ENCODE measurements at regions of chr17 and their contacts with region 1.

Region 1: DNA sequence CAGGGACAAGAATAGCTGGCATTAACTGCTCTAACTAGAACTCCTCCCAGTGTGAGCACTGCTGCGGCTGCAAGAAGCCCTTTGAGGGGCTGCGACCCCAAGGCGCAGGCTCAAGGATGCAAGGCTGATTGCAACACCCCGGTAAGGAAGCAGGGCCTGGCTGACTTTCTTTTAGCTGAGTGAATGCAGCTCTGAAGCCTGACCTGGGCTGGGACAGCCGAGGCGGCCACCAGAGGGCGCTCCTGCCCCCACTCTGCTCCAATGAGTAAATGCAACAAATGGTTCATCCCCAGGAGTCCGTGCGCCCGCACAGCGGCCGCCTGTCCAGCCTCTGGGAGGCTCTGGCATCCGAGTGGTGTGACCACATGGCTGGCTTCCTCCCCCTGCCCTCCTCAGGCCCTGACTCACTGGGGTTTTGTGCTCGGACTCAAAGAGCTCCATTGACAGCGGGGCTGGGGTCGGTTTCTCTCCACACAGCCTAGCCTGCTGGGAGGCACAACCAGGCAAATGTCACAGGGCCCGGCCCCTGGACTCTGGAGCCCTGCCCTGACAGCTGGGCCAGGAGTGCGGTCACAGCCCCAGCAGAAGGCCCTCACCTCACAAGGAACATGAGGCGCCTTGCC is at the start of gene SMIM5:
- H3K4me3 ChIP-seq: no peak within 1 kb of the TSS
- H3K27ac ChIP-seq: no peak within 1 kb of the TSS
- H3K4me1 ChIP-seq: peaks cover 11% of the 10 kb centered on the region
- CTCF ChIP-seq: peak; percentile 83

Region 2: DNA sequence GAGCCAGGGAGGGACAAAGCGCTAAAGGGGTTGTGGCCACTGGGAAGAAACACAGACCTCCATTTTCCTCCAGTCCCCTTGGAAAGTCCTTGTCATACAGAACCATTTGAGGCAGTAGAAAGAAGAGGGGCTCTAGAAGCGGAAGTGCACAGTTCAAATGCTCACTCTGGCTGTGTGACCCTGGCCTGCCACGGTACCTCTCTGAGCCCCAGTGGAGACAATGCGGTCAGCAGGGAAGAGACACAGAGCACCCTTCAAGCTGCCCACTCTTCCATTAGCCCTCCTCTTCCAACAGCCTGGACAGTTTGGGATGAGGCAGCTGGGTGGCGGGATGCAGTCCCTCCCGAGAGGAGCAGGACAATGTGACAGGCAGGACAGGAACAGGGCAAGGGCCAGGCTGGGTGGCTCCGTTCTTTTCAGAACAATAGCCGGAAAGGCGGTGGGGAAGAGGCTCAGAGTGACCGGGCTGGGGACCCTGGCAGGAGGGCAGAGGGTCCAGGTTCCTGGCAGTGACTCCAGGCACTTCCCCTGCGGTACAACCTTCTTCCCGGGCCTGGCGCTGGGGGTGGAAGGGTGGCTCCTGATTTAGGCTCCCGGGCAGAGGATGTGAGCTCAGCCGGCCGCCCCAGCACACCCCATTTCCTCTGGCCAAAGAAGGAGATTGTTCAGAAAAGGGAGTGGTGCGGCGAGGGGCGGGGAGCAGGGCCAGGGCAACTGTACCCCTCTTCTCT is 123.3 kb before region 1 on chr17:
- CTCF ChIA-PET with region 1: no interaction called
- POLR2A ChIA-PET with region 1: no interaction called
- H3K4me3 ChIP-seq: no peak overlapping the region
- H3K27ac ChIP-seq: no peak overlapping the region
- H3K4me1 ChIP-seq: no peaks in the 10 kb centered on the region
- CTCF ChIP-seq: no peak

Region 3: GRCh38 chr17:75589012-75589918 is 43.7 kb before region 1 on chr17:
- CTCF ChIA-PET with region 1: interaction called, 11 read pairs
- POLR2A ChIA-PET with region 1: interaction called, 3 read pairs
- H3K4me3 ChIP-seq: peak overlapping the region; percentile 48
- H3K27ac ChIP-seq: peak overlapping the region; percentile 60; the same call in 1 of the 2 replicates
- H3K4me1 ChIP-seq: peaks cover 2% of the 10 kb centered on the region; the same call in 1 of the 2 replicates
- CTCF ChIP-seq: peak; percentile 58

Region 4: DNA sequence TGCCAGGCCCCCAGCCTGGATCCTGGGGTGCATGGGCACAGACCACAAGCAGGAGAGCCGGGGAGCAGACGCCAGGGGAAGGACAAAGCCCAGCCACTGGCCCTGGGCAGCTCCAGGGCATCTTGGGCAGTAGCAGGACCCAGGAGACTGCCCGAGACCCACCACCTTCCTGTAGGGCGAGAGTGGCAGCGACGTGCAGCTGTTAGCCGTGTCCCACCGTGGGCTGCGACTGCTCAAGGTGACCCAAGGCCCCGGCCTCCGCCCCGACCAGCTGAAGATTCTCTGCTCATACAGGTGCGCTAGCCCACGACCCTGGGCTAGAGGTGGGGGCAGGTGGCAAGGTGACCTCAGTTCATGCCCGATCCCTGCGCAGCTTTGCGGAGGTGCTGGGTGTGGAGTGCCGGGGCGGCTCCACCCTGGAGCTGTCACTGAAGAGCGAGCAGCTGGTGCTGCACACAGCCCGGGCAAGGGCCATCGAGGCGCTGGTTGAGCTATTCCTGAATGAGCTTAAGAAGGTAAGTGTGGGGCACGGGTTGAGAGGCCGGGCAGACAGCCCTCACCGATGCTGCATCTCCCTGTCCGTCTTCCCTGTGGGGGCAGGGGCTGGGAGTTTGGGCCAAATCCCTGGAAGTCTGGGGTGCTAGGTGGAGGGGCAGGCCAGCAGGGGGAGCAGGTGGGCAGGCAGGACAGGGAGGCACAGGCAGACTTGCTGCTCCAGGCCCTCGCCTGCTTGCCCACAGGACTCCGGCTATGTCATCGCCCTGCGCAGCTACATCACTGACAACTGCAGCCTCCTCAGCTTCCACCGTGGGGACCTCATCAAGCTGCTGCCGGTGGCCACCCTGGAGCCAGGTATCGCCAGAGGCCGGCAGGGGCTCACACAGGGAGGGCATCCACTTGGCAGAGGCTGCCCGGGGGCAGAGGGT is 13.2 kb before region 1 on chr17:
- CTCF ChIA-PET with region 1: interaction called, 47 read pairs
- POLR2A ChIA-PET with region 1: interaction called, 5 read pairs
- H3K4me3 ChIP-seq: no peak overlapping the region
- H3K27ac ChIP-seq: no peak overlapping the region
- H3K4me1 ChIP-seq: no peaks in the 10 kb centered on the region
- CTCF ChIP-seq: peak; percentile 92

Region 5: DNA sequence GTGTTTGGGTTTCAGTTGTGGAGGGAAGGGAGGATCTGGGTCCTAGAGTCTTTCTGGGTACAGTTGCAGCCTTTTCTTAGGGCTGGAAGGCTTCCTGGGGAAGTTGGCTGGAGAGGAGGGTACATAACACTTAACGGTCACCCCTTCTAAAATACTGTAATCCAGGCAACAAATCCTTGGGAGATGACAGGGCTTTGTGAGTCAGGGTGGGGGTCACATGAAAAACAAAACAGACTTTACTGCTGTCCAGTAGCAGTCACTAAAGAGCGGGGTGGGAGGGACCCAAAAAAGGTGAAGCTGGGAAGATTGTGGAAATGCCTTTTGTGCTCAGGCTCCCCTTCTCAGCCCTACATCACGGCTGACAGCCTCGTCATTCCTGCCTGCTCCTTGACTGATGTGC is 40.5 kb after region 1 on chr17:
- CTCF ChIA-PET with region 1: interaction called, 42 read pairs
- POLR2A ChIA-PET with region 1: no interaction called
- H3K4me3 ChIP-seq: no peak overlapping the region
- H3K27ac ChIP-seq: no peak overlapping the region
- H3K4me1 ChIP-seq: no peaks in the 10 kb centered on the region
- CTCF ChIP-seq: no peak

Region 6: DNA sequence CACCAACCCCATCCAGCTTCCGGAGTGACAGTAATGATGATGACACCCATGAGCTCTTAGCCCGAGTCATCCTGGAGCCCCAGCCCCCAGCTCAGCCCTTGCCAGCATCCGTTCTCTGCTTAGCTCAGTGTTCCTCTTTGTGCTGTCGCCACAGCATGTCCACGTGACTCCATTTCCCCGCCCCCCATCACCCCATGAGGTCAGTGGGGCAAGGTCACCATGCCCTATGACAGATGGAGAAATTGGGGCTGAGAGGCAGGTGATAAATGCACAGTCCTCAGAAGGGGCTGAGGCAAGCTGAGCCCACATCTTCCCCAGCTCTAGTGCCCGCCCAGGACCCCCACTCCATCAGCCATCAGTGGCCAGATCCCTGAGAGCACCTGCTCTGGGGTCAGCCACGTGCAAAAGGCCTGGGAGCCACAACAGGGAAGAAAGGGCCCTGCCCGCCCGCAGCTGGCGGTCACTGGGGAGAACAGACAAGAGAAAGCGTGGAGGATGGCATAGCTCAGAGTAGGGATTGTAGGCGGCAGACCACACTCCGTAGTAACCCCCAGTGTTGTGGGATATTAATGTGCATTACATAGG is 105.3 kb after region 1 on chr17:
- CTCF ChIA-PET with region 1: interaction called, 13 read pairs
- POLR2A ChIA-PET with region 1: no interaction called
- H3K4me3 ChIP-seq: no peak overlapping the region
- H3K27ac ChIP-seq: no peak overlapping the region
- H3K4me1 ChIP-seq: no peaks in the 10 kb centered on the region
- CTCF ChIP-seq: no peak